CD8-positive, alpha-beta memory T cell (primary cell): ENCODE measurements at regions of chr6 and their contacts with region 1.

Region 1: GRCh38 chr6:112311950-112312547 is 35.1 kb upstream of the RFPL4B start:
- DNase-seq: peak in 2 of 5 donors; percentile 10 to 18
- H3K4me3 ChIP-seq: no peak overlapping the region
- H3K4me3 Mint-ChIP-seq: no peak overlapping the region
- H3K27ac ChIP-seq: no peak overlapping the region
- H3K27ac Mint-ChIP-seq: no peak overlapping the region
- H3K4me1 ChIP-seq: no peaks in the 10 kb centered on the region
- H3K4me1 Mint-ChIP-seq: no peaks in the 10 kb centered on the region
- H3K27me3 ChIP-seq: peaks cover under 1% of the 10 kb centered on the region
- H3K27me3 Mint-ChIP-seq: peaks cover 4 to 24% of the 10 kb centered on the region in 2 donors

Region 2: GRCh38 chr6:112180095-112180820 is 131.8 kb before region 1 on chr6:
- CTCF ChIA-PET with region 1: interaction called, 21 read pairs
- POLR2A ChIA-PET with region 1: no interaction called
- DNase-seq: peak; percentile 33 to 65 (median 51)
- H3K4me3 ChIP-seq: no peak overlapping the region
- H3K4me3 Mint-ChIP-seq: no peak overlapping the region
- H3K27ac ChIP-seq: no peak overlapping the region
- H3K27ac Mint-ChIP-seq: no peak overlapping the region
- H3K4me1 ChIP-seq: no peaks in the 10 kb centered on the region
- H3K4me1 Mint-ChIP-seq: no peaks in the 10 kb centered on the region
- H3K27me3 ChIP-seq: peaks cover 4% of the 10 kb centered on the region
- H3K27me3 Mint-ChIP-seq: peaks cover 18 to 54% of the 10 kb centered on the region in 2 donors